Activated CD4-positive, alpha-beta T cell treated with anti-CD3 and anti-CD28 coated beads, Interleukin-2, amount 10 ng/mL, durations not matched to agents 24 days and 14 days (primary cell): ENCODE measurements at regions of chr11 and their contacts with region 1.

Region 1: DNA sequence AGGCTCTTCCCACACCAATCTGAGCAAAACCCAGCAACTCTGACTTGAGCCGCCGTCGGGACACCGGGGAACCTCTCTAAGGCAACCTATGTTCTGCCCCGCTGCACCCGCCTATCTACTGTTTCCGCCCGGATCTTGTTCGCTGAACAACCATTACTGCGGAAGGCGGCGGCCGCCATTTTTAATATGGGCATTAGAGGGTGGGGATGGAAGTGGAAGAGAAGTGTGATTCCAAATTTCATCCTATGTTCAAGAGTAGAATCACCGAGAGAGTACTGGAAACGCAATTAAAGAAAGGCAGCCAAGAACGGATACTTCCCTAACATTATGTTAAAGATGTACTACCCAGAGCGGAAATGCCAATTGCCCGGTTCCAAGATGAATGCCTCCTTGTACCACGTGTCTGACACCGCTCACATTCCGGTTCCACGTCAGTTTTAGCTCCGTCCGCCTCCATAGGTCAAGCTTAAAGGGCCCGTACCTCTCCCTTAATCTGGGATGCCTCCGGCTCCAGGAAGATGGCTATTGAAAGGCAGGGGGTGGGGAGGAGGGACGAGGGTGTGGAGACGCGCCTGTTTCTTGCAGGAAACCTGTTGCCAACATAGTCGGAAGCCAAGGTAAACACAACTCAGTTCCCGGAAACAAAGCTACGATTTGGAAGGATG is at the start of gene DPAGT1:
- DNase-seq: peak; percentile 96
- H3K4me3 Mint-ChIP-seq: peak within 1 kb of the TSS; percentile 92
- H3K27ac Mint-ChIP-seq: peak within 1 kb of the TSS; percentile 99
- H3K4me1 Mint-ChIP-seq: peaks cover 40% of the 10 kb centered on the region
- H3K27me3 Mint-ChIP-seq: no peaks in the 10 kb centered on the region
- total RNA-seq, gene DPAGT1: 76.1 and 79.4 TPM in 2 replicates

Region 2: DNA sequence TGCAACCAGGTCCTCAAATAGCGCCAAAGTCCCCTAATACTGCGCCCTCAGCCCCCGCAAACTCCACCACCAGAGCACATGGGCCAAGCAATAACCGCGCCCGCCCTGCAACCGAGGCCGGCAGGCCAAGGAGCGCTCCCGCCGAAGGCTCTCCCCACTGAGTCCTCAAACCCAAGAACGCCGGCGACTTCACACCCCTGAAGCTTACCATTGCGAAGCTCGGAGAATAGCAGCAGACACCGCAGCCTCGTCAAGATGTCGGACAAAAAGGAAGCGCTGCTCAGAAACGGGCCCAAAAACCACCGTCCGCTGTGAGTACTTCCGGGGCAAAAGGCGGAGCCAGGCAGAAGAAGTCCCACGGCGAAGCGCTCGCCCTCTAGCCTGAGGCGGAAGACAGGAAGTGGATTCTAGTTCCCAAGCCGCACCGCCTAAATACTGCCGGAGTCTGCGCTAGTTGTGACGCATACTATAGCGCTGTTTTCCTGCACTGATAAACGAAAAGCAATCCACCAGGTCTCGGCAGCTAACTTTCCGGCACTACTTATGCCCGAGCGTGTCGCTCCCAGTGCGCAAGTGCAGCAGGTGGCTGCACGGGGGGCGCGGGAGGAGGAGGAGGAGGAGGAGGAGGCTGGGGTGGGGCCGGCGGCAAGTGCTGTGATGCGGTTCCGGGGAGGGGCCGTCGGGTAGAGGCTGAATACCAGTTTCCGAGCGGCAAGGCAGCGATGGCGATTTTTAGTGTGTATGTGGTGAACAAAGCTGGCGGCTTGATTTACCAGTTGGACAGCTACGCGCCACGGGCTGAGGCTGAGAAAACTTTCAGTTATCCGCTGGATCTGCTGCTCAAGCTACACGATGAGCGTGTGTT is 83.6 kb before region 1 on chr11 and contains the starts of genes RPS25 and TRAPPC4:
- intact Hi-C with region 1: loop called (anchors 1 kb)
- DNase-seq: peak; percentile 98
- H3K4me3 Mint-ChIP-seq: peak within 1 kb of the TSS; percentile 100
- H3K27ac Mint-ChIP-seq: peak within 1 kb of the TSS; percentile 99
- H3K4me1 Mint-ChIP-seq: peaks cover 35% of the 10 kb centered on the region
- H3K27me3 Mint-ChIP-seq: no peaks in the 10 kb centered on the region
- total RNA-seq, gene RPS25: 1,641 and 1,650 TPM in 2 replicates
- total RNA-seq, gene TRAPPC4: 141 and 151 TPM in 2 replicates

Region 3: DNA sequence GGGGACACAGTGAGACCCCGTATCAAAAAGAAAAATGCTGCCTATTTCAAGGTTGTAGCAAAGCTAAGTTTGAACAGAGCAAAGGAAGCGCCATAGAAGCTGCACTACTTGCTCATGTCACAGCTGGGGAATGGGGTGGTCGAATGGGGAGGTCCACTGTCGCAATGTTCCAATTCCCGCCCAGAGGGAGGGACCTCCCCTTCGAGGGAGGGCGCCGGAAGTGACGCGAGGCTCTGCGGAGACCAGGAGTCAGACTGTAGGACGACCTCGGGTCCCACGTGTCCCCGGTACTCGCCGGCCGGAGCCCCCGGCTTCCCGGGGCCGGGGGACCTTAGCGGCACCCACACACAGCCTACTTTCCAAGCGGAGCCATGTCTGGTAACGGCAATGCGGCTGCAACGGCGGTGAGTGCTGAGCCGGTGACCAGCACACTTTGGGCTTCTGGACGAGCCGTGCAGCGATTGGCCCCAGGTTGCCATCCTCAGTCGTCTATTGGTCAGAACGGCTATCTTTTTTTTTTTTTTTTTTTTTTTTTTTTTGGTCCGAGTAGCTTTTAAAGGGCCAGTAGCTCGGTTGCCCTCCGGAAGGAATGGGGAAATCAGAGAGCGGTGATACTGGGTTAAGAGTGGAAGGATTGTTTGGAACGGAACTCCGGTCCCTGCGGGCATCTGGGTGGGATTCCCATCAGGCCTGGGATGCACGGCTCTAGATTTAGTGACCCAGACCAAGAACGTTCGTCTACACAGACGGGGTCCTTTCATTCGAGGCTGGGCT is 17.0 kb before region 1 on chr11 and contains the start of gene HMBS:
- intact Hi-C with region 1: loop called (anchors 2 kb)
- DNase-seq: peak; percentile 98
- H3K4me3 Mint-ChIP-seq: peak within 1 kb of the TSS; percentile 97
- H3K27ac Mint-ChIP-seq: peak within 1 kb of the TSS; percentile 95
- H3K4me1 Mint-ChIP-seq: peaks cover 24% of the 10 kb centered on the region
- H3K27me3 Mint-ChIP-seq: no peaks in the 10 kb centered on the region
- total RNA-seq, gene HMBS: 60.9 and 62.8 TPM in 2 replicates

Region 4: GRCh38 chr11:119115484-119116234 is 13.8 kb after region 1 on chr11:
- intact Hi-C with region 1: loop called (anchors 1 kb)
- DNase-seq: peak; percentile 78
- H3K4me3 Mint-ChIP-seq: peak overlapping the region; percentile 86
- H3K27ac Mint-ChIP-seq: peak overlapping the region; percentile 98
- H3K4me1 Mint-ChIP-seq: peaks cover 27% of the 10 kb centered on the region
- H3K27me3 Mint-ChIP-seq: no peaks in the 10 kb centered on the region

Region 5: DNA sequence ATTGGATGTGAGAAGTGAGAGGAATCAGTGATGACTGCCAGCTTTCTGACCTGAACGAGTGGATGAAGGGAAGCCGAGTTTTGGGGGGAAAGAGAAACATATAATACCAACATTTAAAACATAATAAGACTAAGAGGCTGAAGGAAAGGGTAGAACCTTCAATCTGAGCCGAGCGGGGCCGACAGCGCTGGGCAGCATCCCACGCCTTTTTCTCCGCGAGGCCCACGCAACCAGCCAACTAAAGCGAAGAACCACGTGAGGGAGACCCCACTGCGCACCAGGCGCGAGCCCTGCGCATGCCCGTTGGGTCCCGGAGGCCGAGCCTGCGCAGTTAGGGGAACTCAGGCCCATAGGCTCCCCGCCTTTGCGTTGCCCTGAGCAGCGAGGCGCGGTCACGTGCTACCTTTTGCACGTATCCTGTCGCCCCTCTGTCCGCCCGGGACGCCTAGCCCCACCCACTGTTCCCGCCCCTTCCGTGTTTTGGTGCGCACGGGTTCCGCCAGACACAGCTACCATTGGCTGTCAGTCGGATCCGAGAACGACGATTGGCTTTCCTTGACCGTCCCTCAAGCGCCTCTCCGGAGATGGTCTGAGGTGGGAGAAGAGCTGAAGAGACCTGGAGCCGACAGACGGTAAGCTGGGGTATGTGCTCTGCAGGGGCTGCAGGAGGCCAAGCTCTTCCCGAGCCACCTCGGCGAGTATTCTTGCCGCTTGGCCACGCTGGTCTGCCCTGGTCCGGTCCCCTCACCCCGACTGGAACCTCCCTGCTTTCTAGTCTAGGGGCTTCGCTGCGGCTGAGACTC is 19.3 kb after region 1 on chr11 and contains the start of gene HINFP:
- intact Hi-C with region 1: loop called (anchors 1 kb)
- DNase-seq: peak; percentile 100
- H3K4me3 Mint-ChIP-seq: peak within 1 kb of the TSS; percentile 98
- H3K27ac Mint-ChIP-seq: peak within 1 kb of the TSS; percentile 89
- H3K4me1 Mint-ChIP-seq: peaks cover 26% of the 10 kb centered on the region
- H3K27me3 Mint-ChIP-seq: no peaks in the 10 kb centered on the region
- total RNA-seq, gene HINFP: 34.9 and 41.4 TPM in 2 replicates

Region 6: GRCh38 chr11:119196833-119197483 is 95.1 kb after region 1 on chr11:
- intact Hi-C with region 1: loop called (anchors 2 kb)
- DNase-seq: peak; percentile 93
- H3K4me3 Mint-ChIP-seq: no peak overlapping the region
- H3K27ac Mint-ChIP-seq: no peak overlapping the region
- H3K4me1 Mint-ChIP-seq: peaks cover 6% of the 10 kb centered on the region
- H3K27me3 Mint-ChIP-seq: no peaks in the 10 kb centered on the region

Region 7: DNA sequence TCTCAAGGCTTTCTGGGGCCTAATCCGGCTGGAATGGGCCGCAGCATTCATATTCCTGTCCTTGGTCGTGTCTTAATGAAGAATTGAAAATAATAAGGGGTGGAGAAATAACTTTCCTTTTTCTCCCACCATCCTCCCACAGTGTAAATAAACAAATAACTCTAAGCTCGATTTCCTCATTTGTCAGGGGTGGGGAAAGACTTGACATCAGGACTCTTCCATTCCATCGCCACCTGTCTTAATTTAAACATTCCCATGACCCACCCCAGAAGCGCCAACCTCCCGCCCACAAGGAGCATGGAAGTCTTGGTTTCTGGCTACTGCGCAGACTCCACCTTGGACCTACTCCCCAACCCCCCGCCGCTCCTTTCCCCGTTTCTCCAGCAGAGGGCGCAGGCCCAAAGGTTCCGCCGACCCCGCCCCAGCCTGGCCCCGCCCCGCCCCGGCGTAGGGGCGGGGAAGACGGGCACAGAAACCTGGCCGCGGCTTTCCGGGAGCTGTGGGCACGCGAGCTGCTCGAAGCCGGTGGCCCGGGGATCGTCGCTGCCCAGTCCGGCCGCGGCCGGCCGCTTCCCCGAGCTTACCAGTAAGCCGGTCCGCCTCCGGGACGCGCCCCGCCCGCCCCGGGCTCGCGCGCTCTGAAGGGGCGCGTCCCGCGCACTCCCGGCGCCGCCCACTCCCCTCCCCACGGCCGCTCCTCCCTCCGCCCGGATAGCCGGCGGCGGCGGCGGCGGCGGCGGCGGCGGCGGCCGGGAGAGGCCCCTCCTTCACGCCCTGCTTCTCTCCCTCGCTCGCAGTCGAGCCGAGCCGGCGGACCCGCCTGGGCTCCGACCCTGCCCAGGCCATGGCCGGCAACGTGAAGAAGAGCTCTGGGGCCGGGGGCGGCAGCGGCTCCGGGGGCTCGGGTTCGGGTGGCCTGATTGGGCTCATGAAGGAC is 104.0 kb after region 1 on chr11 and contains the start of gene CBL:
- intact Hi-C with region 1: loop called (anchors 5 kb)
- DNase-seq: peak; percentile 98
- H3K4me3 Mint-ChIP-seq: peak within 1 kb of the TSS; percentile 99
- H3K27ac Mint-ChIP-seq: peak within 1 kb of the TSS; percentile 93
- H3K4me1 Mint-ChIP-seq: peaks cover 18% of the 10 kb centered on the region
- H3K27me3 Mint-ChIP-seq: no peaks in the 10 kb centered on the region
- total RNA-seq, gene CBL: 36.4 and 36.5 TPM in 2 replicates